ENCODE measurements at regions of chr5 and their contacts with region 1.

Region 1: DNA sequence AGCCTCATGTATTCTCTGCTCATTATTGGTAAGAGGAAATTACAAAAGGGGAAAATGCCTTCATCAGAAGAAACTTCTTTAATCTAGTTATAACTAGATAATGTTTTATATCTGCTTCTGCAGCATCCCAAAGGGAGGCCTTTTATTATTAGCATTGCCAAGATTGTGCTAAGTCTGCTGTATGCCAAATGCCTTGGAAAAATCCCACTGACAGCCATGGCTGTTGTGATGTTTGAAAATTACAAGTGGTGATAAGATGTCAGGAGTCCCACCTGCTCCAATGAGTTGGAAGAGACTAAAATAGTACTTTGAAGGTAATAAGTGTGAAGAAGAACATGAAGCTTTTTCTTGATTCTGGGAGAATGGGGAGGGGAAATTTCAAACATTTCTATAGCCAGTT is 345.0 kb downstream of the GABRB2 start:
- DNase-seq: no peak
- H3K4me3 ChIP-seq: no peak overlapping the region
- CTCF ChIP-seq: no peak
- POLR2A ChIP-seq: no peak

Region 2: DNA sequence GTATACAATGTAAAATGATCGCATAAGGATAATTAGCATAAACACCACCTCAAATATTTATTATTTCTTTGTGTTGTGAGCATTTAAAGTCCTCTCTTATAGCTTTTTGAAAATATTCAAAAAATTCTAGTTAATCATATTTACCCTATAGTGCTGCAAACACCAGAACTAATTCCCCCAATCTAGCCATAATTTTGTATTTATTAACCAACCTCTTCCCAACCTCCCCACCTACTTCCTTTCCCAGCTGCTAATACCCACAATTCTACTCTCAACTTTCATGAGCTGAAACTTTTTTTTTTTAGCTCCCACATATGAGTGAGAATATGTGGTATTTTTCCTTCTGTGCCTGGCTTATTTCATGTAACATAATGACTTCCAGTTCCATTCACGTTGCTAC is 31.8 kb before region 1 on chr5:
- intact Hi-C with region 1: loop called (anchors 2 kb)
- DNase-seq: no peak
- H3K4me3 ChIP-seq: no peak overlapping the region
- CTCF ChIP-seq: no peak
- POLR2A ChIP-seq: no peak